ENCODE measurements at regions of chr2 and their contacts with region 1.

Region 1: DNA sequence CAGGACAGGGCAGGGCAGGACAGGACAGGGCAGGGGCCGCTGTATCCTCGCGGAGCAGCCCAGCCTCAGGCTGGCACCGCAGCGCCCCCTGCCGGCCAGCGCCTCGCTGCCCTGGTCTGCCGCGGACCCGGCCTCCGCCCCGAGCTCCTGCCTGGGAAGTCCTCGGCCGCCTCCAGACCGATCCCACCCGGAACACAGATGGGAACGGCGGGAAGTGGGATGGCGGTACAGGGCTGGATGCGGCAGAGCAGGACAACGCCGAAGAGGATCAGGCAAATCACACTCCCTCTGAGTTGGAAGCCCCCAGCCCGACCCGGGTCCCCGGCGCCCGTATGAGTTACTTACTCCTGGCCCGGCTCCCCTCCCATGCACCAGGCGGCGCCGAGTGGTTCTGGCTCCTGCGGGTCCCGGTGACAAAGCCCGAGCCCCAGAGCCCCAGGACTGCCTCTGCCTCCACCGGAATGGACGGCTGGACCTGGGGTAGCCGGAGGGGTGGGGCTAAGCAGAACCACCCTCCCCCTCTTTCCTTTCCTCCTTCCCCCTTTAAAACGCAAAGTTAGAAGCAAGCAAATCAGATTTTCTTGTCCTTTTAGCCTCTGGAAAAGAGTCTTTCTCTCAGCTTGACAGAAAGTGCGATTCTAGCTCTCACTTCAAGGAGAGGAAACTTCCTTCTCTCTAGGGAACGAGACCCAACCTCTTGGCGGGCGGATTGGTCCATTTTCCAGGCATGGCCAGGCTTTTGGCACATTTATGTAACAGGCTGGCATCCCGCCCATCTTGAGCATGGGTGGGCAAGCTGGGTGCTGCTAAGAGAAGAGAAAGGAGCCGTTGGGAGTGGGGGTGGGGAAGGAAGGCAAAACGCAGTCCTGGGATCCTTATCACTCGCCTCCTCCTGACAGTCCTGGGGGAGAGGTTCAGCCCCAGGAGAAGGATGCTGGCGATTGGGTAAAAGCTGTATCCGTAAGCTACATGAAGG is at the start of gene TP53I3:
- DNase-seq: peak; percentile 79
- H3K4me3 Mint-ChIP-seq: peak within 1 kb of the TSS; percentile 84
- H3K27ac Mint-ChIP-seq: peak within 1 kb of the TSS; percentile 70
- H3K4me1 Mint-ChIP-seq: peaks cover 18% of the 10 kb centered on the region
- H3K27me3 Mint-ChIP-seq: no peaks in the 10 kb centered on the region
- total RNA-seq, gene TP53I3: 2.7 and 3.1 TPM in 2 replicates

Region 2: DNA sequence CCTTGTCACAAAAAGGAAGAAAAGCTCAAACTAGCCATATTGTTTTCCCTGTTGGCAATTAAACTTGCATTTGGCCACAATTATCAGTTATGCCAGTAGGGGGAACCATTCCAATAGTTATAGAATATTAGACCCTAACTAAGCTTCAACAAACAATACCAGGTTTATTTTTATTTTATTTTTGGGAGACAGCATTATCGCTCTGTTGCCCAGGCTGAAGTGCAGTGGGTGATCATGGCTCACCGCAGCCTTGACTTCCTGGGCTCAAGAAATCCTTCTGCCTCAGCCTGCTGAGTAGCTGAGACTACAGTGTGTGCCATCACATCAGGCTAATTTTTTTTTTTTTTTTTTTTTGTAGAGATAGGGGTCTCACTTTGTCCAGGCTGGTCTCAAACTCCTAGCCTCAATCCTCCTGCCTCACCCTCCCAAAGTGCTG is 259.9 kb before region 1 on chr2:
- intact Hi-C with region 1: loop called (anchors 1 kb)
- DNase-seq: no peak
- H3K4me3 Mint-ChIP-seq: no peak overlapping the region
- H3K27ac Mint-ChIP-seq: no peak overlapping the region
- H3K4me1 Mint-ChIP-seq: no peaks in the 10 kb centered on the region
- H3K27me3 Mint-ChIP-seq: no peaks in the 10 kb centered on the region